A673 (cell line): ENCODE measurements at regions of chr1 and their contacts with region 1.

Region 1: DNA sequence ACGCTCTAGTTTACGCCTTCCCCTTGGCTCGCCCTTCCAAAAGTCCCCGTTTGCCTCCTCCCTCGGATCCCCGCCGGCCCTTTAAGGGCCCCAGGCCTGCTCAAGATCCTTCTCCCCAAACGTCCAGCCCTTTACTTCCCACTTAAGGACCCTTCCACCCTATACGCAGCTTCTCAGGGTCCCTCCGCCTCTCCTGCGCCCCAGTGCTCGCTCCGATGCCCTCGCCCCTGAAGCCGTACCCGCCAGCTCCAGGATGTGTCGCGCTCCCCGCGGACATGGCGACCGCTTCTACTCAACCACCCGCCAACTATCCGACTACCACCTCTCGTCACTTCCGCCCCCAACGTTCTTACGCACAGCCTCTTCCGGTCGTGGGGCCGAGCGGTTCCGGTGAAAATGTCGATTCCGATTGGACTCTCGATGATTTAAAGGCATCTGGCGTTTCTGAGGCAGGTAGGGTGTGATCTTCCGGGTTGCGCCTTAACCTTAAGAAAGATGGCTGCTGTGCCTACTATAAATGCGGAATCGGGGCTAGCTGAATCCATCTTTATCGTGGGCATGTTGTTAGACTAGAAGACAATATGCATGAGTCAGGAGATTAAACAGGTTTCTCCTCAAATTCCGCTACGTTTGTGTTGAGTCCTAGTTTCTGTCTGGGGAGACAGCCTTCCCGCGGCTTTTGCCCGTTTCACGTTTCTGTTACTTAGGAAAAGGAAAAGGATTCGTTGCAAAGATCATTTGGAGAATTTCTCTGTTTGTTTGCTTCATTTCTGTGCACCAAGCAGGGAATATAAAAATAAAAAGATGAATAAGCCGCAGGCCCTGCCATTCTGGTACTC is at the start of gene KHDC4:
- DNase-seq: peak; percentile 99
- H3K4me3 ChIP-seq: peak within 1 kb of the TSS; percentile 67
- H3K27ac ChIP-seq: peak within 1 kb of the TSS; percentile 90
- H3K4me1 ChIP-seq: peaks cover 35% of the 10 kb centered on the region
- H3K27me3 ChIP-seq: no peaks in the 10 kb centered on the region
- CTCF ChIP-seq: no peak
- total RNA-seq, gene KHDC4: 92.7 and 93.3 TPM in 2 replicates

Region 2: DNA sequence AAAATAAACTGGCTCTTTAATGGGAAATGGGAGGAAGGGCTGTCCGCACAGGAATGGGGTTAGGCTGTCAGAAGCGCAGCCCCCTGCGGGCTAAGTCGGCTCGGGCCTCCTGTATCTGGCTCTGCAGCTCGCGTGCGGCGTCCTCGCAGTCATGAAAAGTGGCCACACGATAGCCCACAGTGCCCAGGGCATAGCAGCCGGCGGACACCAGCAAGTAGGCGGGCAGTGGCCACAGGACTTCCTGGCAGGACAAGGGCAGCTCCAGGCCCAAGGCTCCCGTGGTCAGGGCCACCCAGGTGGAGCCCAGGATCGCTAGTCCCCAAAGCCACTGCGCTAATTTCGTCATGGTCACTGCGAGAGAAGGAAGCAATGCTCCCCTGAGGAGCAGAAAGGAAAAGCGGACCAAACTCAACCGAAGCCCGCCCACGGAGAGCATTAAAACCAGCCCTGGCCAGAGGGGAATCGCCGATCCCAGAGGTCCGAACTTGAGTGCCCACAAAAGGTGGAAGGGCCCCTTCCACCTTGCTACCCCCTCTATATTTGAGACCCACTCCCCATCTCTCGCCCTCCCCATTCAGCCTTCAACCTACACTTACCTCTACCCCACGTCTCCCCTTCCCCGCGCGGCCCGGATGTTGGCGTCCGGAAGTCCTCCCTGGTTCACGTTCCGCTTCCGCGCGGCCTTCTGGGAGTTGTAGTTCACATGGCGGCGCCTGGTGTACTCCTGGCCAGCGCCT is 794.3 kb before region 1 on chr1 and contains the start of gene DPM3:
- CTCF ChIA-PET with region 1: no interaction called
- POLR2A ChIA-PET with region 1: no interaction called
- intact Hi-C with region 1: no loop called
- DNase-seq: peak; percentile 93
- H3K4me3 ChIP-seq: peak within 1 kb of the TSS; percentile 87
- H3K27ac ChIP-seq: peak within 1 kb of the TSS; percentile 80
- H3K4me1 ChIP-seq: peaks cover 12% of the 10 kb centered on the region
- H3K27me3 ChIP-seq: no peaks in the 10 kb centered on the region
- CTCF ChIP-seq: no peak
- total RNA-seq, gene DPM3: 34.0 and 37.4 TPM in 2 replicates

Region 3: DNA sequence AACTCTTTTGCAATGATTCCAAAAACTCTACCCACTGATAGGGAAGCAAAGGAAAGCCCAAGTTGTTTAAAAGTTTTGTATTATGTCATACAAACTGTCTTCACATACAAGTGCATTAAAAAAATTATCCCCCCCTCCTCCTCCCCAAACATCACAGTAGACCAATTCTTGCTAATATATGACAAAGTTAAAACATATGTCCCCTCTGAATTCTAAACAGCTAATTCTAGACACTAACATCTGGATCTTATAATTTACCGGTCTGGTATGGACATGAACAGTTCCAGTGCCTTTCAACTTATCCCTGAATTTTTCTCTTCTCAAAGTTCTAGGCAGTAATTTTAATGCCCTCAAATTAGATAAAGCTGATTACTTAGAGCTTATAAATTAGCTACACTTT is 36.6 kb before region 1 on chr1:
- CTCF ChIA-PET with region 1: no interaction called
- POLR2A ChIA-PET with region 1: no interaction called
- intact Hi-C with region 1: no loop called
- DNase-seq: peak; percentile 12
- H3K4me3 ChIP-seq: no peak overlapping the region
- H3K27ac ChIP-seq: no peak overlapping the region
- H3K4me1 ChIP-seq: peaks cover 18% of the 10 kb centered on the region
- H3K27me3 ChIP-seq: no peaks in the 10 kb centered on the region
- CTCF ChIP-seq: no peak

Region 4: GRCh38 chr1:155968670-155969069 is 34.4 kb after region 1 on chr1:
- CTCF ChIA-PET with region 1: no interaction called
- POLR2A ChIA-PET with region 1: interaction called, 17 read pairs
- intact Hi-C with region 1: no loop called
- DNase-seq: no peak
- H3K4me3 ChIP-seq: no peak overlapping the region
- H3K27ac ChIP-seq: no peak overlapping the region
- H3K4me1 ChIP-seq: peaks cover 48% of the 10 kb centered on the region
- H3K27me3 ChIP-seq: no peaks in the 10 kb centered on the region
- CTCF ChIP-seq: no peak

Region 5: GRCh38 chr1:155989242-155990004 is 55.1 kb after region 1 on chr1:
- CTCF ChIA-PET with region 1: interaction called, 7 read pairs
- POLR2A ChIA-PET with region 1: interaction called, 3 read pairs
- intact Hi-C with region 1: loop called (anchors 1 kb)
- DNase-seq: peak; percentile 82
- H3K4me3 ChIP-seq: no peak overlapping the region
- H3K27ac ChIP-seq: no peak overlapping the region
- H3K4me1 ChIP-seq: peaks cover under 1% of the 10 kb centered on the region
- H3K27me3 ChIP-seq: no peaks in the 10 kb centered on the region
- CTCF ChIP-seq: peak; percentile 97

Region 6: DNA sequence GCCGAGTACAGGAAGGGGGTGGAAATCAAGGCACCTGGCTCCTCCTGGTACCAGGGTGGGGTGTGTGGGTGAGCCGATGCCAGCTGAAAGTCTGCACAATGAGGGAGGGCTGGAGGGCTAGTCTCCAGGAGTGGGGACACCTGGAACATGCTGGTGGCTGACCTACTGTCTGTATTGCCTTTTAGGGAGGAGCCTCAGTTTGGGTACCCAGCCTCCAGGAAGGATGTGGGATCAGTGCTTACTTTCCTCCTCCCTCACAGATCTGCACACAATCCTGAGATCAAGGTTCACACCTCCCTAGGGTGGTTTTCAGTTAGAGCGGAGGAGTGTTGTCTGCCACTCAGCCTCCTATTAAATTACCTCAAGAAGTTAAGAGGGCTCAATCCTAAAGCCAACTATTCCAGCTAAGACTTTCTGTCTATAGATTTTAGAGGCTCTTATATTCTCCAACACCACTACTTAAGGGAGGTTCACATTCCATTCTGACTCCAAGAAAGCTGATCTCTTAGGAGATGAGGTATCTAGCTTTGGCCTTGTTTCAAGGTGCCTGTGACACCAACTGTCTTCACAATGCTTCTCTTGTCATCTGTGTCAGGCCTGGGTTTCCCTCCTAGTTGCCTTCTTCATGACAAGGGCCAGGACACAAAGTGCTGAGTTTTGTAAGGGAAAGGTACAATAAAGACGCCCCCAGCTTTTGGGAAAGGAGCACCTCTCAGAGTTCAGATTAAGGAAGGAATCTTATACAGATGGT is 70.7 kb after region 1 on chr1:
- CTCF ChIA-PET with region 1: no interaction called
- POLR2A ChIA-PET with region 1: interaction called, 20 read pairs
- intact Hi-C with region 1: no loop called
- DNase-seq: no peak
- H3K4me3 ChIP-seq: no peak overlapping the region
- H3K27ac ChIP-seq: no peak overlapping the region
- H3K4me1 ChIP-seq: no peaks in the 10 kb centered on the region
- H3K27me3 ChIP-seq: no peaks in the 10 kb centered on the region
- CTCF ChIP-seq: no peak

Region 7: GRCh38 chr1:156065212-156065611 is 130.9 kb after region 1 on chr1:
- CTCF ChIA-PET with region 1: interaction called, 17 read pairs
- POLR2A ChIA-PET with region 1: no interaction called
- intact Hi-C with region 1: loop called (anchors 5 kb)
- DNase-seq: no peak
- H3K4me3 ChIP-seq: no peak overlapping the region
- H3K27ac ChIP-seq: no peak overlapping the region
- H3K4me1 ChIP-seq: peaks cover 11% of the 10 kb centered on the region
- H3K27me3 ChIP-seq: no peaks in the 10 kb centered on the region
- CTCF ChIP-seq: no peak

Region 8: GRCh38 chr1:156082309-156083091 is 148.2 kb after region 1 on chr1 and contains the start of gene MEX3A:
- CTCF ChIA-PET with region 1: no interaction called
- POLR2A ChIA-PET with region 1: no interaction called
- intact Hi-C with region 1: no loop called
- DNase-seq: peak; percentile 91
- H3K4me3 ChIP-seq: peak within 1 kb of the TSS; percentile 86
- H3K27ac ChIP-seq: peak within 1 kb of the TSS; percentile 89
- H3K4me1 ChIP-seq: peaks cover 40% of the 10 kb centered on the region
- H3K27me3 ChIP-seq: no peaks in the 10 kb centered on the region
- CTCF ChIP-seq: no peak
- total RNA-seq, gene MEX3A: 90.0 and 92.5 TPM in 2 replicates